ENCODE measurements at regions of chr22 and their contacts with region 1.

Region 1: DNA sequence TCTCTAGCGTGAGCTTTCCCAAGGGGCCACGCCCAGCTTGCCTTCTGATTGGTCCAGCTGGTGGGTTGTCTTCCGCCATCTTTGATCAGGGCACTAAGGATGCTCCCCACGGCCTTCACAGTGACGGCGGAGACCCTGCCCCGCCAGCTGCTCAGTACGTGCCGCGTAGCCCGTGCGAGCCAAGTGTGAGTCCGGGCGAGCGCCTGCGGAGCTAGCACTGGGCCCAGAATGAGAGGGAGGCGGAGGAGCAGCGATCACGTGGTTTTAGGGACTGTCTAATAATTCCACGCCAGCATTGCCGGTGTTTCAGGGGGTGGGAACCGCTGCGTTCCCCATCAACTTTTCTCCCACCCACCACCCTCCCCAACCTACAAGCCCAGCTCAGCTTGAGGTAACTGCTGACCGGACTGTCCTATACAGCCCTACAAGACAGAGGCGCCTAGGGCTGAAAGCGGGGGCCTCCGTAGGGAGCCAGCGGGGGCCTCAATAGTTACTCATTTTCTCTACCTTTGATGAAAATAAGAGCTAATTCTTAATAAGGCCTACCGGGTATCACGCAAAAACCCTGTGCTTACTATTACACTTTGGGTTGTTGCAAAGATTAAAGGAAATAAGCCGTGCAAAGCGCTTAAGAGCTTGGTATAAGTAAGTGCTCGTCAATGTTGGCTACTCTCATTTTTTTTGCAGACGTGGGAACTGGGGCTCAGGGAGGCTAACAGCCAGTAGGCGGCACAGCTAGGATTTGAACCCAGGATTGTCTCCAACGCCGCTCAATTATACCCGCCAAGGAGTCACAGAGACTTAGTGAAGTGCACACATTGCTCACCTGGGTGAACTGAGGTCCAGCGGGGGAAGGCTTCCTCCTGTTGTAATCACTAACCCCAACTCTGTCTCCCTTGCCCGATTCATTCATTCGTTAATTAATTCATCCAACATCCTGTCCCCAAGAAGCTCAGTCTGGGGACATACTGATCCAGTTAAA is 1.3 kb upstream of the MTFP1 start:
- DNase-seq: peak; percentile 99
- ATAC-seq: peak; percentile 88
- H3K4me3 ChIP-seq: peak overlapping the region; percentile 86
- H3K27ac ChIP-seq: peak overlapping the region; percentile 91
- H3K4me1 ChIP-seq: peaks cover 22% of the 10 kb centered on the region
- H3K27me3 ChIP-seq: no peaks in the 10 kb centered on the region
- CTCF ChIP-seq: peak in 1 of 3 experiments; percentile 15; a peak in 1 of 6 replicates
- EP300 ChIP-seq: no peak; a peak in 1 of 4 replicates
- POLR2A ChIP-seq: peak; percentile 85
- RAD21 ChIP-seq: no peak

Region 2: GRCh38 chr22:30326706-30327362 is 97.4 kb before region 1 on chr22 and contains the start of gene TBC1D10A:
- CTCF ChIA-PET with region 1: interaction called, 8 read pairs
- POLR2A ChIA-PET with region 1: interaction called, 23 read pairs
- RAD21 ChIA-PET with region 1: interaction called, 13 read pairs
- SMC1A ChIA-PET with region 1: interaction called, 5 read pairs
- in situ Hi-C with region 1: no loop called
- intact Hi-C with region 1: no loop called
- DNase-seq: peak; percentile 63
- ATAC-seq: peak; percentile 91
- H3K4me3 ChIP-seq: peak within 1 kb of the TSS; percentile 93
- H3K27ac ChIP-seq: peak within 1 kb of the TSS; percentile 81
- H3K4me1 ChIP-seq: peaks cover 16% of the 10 kb centered on the region
- H3K27me3 ChIP-seq: no peaks in the 10 kb centered on the region
- CTCF ChIP-seq: no peak
- EP300 ChIP-seq: no peak
- POLR2A ChIP-seq: peak; percentile 90
- RAD21 ChIP-seq: no peak
- polyA plus RNA-seq, gene TBC1D10A: 0.27 to 0.82 TPM

Region 3: GRCh38 chr22:30396871-30397655 is 27.2 kb before region 1 on chr22 and contains the start of gene SEC14L2:
- CTCF ChIA-PET with region 1: interaction called, 172 read pairs
- POLR2A ChIA-PET with region 1: interaction called, 60 read pairs
- RAD21 ChIA-PET with region 1: interaction called, 137 read pairs
- SMC1A ChIA-PET with region 1: interaction called, 69 read pairs
- in situ Hi-C with region 1: no loop called
- intact Hi-C with region 1: no loop called
- DNase-seq: no peak
- ATAC-seq: peak; percentile 59
- H3K4me3 ChIP-seq: peak within 1 kb of the TSS; percentile 32; the same call in 1 of the 2 replicates
- H3K27ac ChIP-seq: no peak within 1 kb of the TSS
- H3K4me1 ChIP-seq: peaks cover 18% of the 10 kb centered on the region
- H3K27me3 ChIP-seq: peaks cover 4 to 9% of the 10 kb centered on the region in 2 experiments
- CTCF ChIP-seq: no peak
- EP300 ChIP-seq: no peak
- POLR2A ChIP-seq: peak; percentile 58
- RAD21 ChIP-seq: no peak
- polyA plus RNA-seq, gene SEC14L2: 0.08 to 0.11 TPM

Region 4: DNA sequence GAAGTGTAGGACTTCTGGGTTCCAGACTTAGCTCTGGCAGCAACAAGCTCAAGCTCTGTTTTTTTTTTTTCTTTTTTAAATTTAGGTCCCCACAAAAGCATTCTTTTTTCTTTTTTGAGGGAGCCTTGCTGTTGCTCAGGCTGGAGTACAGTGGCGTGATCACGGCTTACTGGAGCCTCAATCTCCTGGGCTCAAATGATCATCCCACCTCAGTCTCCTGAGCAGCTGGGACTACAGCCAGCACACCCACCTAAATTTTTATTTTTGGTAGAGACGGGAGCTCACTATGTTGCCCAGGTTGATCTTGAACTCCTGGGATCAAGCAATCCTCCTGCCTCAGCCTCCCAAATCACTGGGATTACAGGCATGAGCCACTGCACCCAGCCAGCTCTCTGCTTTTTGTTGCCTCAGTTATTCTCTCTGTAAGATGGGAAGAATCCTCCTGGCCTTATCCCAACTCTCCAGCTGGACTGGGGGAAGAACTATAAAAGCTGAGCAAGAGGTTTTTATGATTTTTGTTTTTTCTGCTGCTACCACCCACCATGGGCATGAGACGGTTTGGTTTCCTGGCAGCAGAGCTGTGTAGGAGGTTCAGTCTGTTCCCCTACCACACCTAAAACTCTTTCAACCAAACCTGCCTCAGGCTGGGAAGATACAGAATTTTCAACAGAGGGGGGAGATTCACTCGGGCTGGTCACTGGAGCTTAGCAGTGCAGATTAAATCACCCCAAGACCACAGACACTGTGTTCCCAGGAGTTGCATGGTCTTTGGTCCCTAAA is 10.3 kb before region 1 on chr22:
- CTCF ChIA-PET with region 1: interaction called, 9 read pairs
- POLR2A ChIA-PET with region 1: interaction called, 19 read pairs
- RAD21 ChIA-PET with region 1: interaction called, 5 read pairs
- SMC1A ChIA-PET with region 1: interaction called, 13 read pairs
- in situ Hi-C with region 1: no loop called
- intact Hi-C with region 1: no loop called
- DNase-seq: no peak
- ATAC-seq: no peak
- H3K4me3 ChIP-seq: no peak overlapping the region
- H3K27ac ChIP-seq: no peak overlapping the region
- H3K4me1 ChIP-seq: no peaks in the 10 kb centered on the region
- H3K27me3 ChIP-seq: no peaks in the 10 kb centered on the region
- CTCF ChIP-seq: no peak
- EP300 ChIP-seq: no peak
- POLR2A ChIP-seq: no peak
- RAD21 ChIP-seq: no peak

Region 5: DNA sequence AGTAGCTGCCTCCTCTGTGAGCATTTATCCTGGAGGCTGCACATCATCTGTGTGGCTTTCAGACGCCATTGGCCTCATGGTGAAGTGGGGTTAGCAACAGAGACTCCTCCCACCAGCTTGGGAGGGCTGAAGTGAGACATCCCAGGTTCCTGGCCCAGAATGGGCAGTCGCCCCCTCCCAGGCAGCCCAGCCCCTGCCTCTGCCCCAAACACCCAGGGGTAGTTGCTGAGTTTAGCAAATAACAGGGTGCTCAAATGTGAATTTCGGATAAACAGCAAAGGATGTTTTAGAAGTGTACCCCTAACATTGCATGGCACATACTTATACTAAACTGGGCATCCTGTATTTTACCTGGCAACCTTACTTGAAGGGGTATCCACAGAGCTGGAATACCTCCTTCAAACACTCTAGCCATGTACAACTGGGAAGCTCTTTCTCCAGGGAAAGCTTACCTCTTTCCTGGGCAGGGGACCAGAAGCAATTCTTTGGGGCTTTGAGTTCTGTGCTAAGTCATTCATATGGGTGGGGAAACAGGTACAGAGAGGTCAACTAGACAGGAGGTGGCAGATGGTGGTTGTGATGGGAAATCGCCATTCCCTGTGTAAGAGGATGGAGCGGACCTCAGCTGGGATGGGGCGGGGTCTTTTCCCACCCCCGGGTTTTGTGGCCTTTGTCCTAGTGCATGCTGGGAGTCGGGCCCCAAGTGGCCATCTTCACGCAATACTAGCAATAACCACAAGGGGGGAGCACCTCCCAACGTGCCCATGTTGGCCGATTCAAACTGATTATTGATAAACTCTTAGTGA is 20.6 kb after region 1 on chr22:
- CTCF ChIA-PET with region 1: interaction called, 14 read pairs
- POLR2A ChIA-PET with region 1: interaction called, 5 read pairs
- RAD21 ChIA-PET with region 1: interaction called, 13 read pairs
- SMC1A ChIA-PET with region 1: interaction called, 11 read pairs
- in situ Hi-C with region 1: no loop called
- intact Hi-C with region 1: no loop called
- DNase-seq: no peak
- ATAC-seq: peak; percentile 78
- H3K4me3 ChIP-seq: no peak overlapping the region
- H3K27ac ChIP-seq: no peak overlapping the region
- H3K4me1 ChIP-seq: peaks cover 11% of the 10 kb centered on the region
- H3K27me3 ChIP-seq: no peaks in the 10 kb centered on the region
- CTCF ChIP-seq: peak; percentile 74 to 81 (median 78)
- EP300 ChIP-seq: no peak
- POLR2A ChIP-seq: peak; percentile 60
- RAD21 ChIP-seq: peak; percentile 80

Region 6: GRCh38 chr22:30743257-30744020 is 319.2 kb after region 1 on chr22:
- CTCF ChIA-PET with region 1: no interaction called
- POLR2A ChIA-PET with region 1: no interaction called
- RAD21 ChIA-PET with region 1: no interaction called
- SMC1A ChIA-PET with region 1: no interaction called
- in situ Hi-C with region 1: no loop called
- intact Hi-C with region 1: no loop called
- DNase-seq: no peak
- ATAC-seq: 0 out of 3 replicates have a peak, but pooled peaks have one; percentile 3
- H3K4me3 ChIP-seq: no peak overlapping the region
- H3K27ac ChIP-seq: no peak overlapping the region
- H3K4me1 ChIP-seq: peaks cover 52% of the 10 kb centered on the region
- H3K27me3 ChIP-seq: no peaks in the 10 kb centered on the region
- CTCF ChIP-seq: no peak
- EP300 ChIP-seq: no peak
- POLR2A ChIP-seq: no peak
- RAD21 ChIP-seq: no peak

Measured in GM12878 (cell line).